ENCODE measurements at regions of chr1 and their contacts with region 1.

Region 1: GRCh38 chr1:44652445-44653106 is 21.7 kb downstream of the TMEM53 start:
- DNase-seq: peak; percentile 81
- H3K4me3 Mint-ChIP-seq: no peak overlapping the region
- H3K27ac Mint-ChIP-seq: peak overlapping the region; percentile 28
- H3K4me1 Mint-ChIP-seq: no peaks in the 10 kb centered on the region
- H3K27me3 Mint-ChIP-seq: no peaks in the 10 kb centered on the region

Region 2: GRCh38 chr1:44217809-44218410 is 434.7 kb before region 1 on chr1:
- CTCF ChIA-PET with region 1: interaction called, 19 read pairs
- DNase-seq: peak; percentile 87
- H3K4me3 Mint-ChIP-seq: no peak overlapping the region
- H3K27ac Mint-ChIP-seq: peak overlapping the region; percentile 26
- H3K4me1 Mint-ChIP-seq: peaks cover 25% of the 10 kb centered on the region
- H3K27me3 Mint-ChIP-seq: no peaks in the 10 kb centered on the region

Region 3: GRCh38 chr1:44339731-44340130 is 312.8 kb before region 1 on chr1:
- CTCF ChIA-PET with region 1: no interaction called
- DNase-seq: no peak
- H3K4me3 Mint-ChIP-seq: no peak overlapping the region
- H3K27ac Mint-ChIP-seq: no peak overlapping the region
- H3K4me1 Mint-ChIP-seq: no peaks in the 10 kb centered on the region
- H3K27me3 Mint-ChIP-seq: no peaks in the 10 kb centered on the region

Region 4: GRCh38 chr1:44571712-44572571 is 80.6 kb before region 1 on chr1:
- CTCF ChIA-PET with region 1: interaction called, 62 read pairs
- DNase-seq: peak; percentile 33
- H3K4me3 Mint-ChIP-seq: no peak overlapping the region
- H3K27ac Mint-ChIP-seq: no peak overlapping the region
- H3K4me1 Mint-ChIP-seq: no peaks in the 10 kb centered on the region
- H3K27me3 Mint-ChIP-seq: peaks cover 32% of the 10 kb centered on the region

Region 5: GRCh38 chr1:44609412-44609767 is 43.2 kb before region 1 on chr1:
- CTCF ChIA-PET with region 1: interaction called, 33 read pairs
- DNase-seq: peak; percentile 51
- H3K4me3 Mint-ChIP-seq: no peak overlapping the region
- H3K27ac Mint-ChIP-seq: no peak overlapping the region
- H3K4me1 Mint-ChIP-seq: no peaks in the 10 kb centered on the region
- H3K27me3 Mint-ChIP-seq: peaks cover 7% of the 10 kb centered on the region

Region 6: DNA sequence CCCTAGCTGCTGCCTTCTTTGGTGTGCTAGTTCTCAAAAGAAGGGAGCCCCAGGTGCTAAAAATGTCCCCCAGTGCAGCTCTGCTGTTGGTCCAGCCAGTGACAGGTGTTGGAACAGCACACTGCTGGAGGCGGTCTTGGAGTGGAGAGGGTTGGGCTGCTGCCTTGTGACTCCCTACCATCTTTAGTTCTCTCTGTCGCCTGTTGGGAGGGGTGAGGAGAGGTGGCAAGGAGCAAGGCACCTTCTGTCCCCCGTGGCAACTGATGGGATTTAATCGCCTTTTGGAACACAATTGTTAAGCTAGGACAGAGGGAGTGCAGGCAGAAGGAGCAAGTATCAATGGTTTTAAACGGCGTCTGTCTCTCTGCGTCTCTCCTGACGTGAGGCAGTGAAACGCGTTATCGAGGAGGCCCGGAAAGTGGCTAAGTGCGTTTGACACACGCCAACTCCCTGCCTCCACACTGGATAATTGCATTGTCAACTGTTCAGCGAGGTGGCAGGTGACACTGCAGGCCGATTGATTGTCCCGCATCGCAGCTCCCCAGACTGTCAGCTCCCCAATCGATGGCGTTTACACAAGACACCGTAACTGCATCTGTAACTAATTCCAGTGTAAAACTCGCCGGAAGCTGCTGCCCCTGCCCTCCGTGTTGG is 12.2 kb before region 1 on chr1:
- CTCF ChIA-PET with region 1: interaction called, 28 read pairs
- DNase-seq: no peak
- H3K4me3 Mint-ChIP-seq: no peak overlapping the region
- H3K27ac Mint-ChIP-seq: no peak overlapping the region
- H3K4me1 Mint-ChIP-seq: no peaks in the 10 kb centered on the region
- H3K27me3 Mint-ChIP-seq: no peaks in the 10 kb centered on the region

Region 7: DNA sequence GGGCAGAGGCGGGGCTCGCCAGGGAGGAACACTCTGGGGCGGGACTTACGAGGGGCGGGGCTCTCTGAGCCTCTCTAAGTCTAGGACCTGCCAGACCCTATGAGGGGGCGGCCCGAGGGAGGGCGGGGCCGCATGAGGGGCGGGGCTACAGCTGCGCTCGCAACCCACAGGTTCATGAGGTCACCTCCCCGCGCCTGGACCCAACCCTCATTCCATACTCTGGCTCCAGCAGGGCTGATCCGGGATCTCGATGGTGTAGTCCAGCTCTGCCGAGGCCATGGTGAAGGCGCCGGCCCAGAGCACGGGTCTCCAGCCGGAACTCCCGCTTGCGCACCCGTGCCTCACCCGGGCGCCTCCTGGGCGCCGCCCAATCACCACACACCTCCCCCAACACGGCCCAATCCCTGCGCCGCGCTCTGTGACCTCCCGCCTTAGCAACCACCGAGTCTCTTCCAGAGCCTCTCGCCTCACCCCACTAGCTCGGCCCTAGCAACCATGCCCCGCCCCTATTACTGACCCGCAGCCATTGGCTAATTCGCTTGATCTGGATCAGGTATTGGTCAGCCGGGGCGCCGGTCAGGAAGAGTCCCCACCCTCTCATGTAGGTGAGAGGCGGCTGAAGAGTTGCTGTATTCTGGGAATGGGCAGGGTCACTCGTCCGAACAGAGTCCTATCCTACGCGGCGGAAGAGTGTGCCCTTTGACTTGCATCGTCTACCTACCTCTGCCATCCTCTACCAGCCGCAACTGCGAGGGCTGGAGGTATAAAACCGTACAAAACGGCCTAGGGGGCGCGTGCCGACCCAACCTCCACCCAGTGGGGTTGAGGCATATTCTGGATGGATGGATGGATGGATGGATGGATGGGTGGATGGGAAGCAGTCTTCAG is 21.8 kb after region 1 on chr1 and contains the starts of genes ARMH1 and TMEM53:
- CTCF ChIA-PET with region 1: interaction called, 13 read pairs
- DNase-seq: peak; percentile 99
- H3K4me3 Mint-ChIP-seq: peak within 1 kb of the TSS; percentile 82
- H3K27ac Mint-ChIP-seq: peak within 1 kb of the TSS; percentile 89
- H3K4me1 Mint-ChIP-seq: peaks cover 25% of the 10 kb centered on the region
- H3K27me3 Mint-ChIP-seq: no peaks in the 10 kb centered on the region

Region 8: GRCh38 chr1:44862829-44863401 is 210.3 kb after region 1 on chr1:
- CTCF ChIA-PET with region 1: no interaction called
- DNase-seq: no peak
- H3K4me3 Mint-ChIP-seq: no peak overlapping the region
- H3K27ac Mint-ChIP-seq: no peak overlapping the region
- H3K4me1 Mint-ChIP-seq: no peaks in the 10 kb centered on the region
- H3K27me3 Mint-ChIP-seq: no peaks in the 10 kb centered on the region

Measured in activated naive CD4-positive, alpha-beta T cell treated with anti-CD3 and anti-CD28 coated beads, Interleukin-2, amount 10 ng/mL, durations not matched to agents 7 days and 5 days (primary cell).